Activated B cell treated with CpG ODN at 0.5 μM for 24 hours (primary cell): ENCODE measurements at regions of chr3 and their contacts with region 1.

Region 1: DNA sequence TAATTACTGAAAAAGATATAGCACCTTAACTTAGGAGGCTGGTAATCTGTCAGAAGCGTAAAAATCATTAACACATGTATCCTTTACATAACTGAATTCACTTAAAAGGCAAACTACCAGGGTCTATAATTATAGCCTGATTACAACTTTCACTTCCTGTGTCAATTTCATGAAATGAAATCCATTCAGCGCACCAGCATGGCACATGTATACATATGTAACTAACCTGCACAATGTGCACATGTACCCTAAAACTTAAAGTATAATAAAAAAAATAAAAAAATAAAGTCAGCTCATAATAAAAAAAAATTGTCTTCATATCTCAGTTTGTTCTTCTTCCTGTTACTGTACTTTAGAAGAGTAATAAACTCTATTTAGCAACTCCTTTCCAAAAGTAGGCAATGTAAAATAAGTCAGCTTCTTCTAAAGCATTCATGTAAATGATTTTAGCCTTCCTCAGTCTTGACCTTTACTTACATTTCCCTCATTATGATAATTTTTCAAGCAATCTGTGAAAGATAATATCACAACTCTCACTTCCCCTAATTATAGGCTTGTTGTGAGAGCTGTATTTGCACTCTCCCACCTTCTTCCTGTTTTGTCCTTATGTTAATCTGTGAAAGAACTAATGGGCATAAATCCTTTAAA is 50.1 kb downstream of the KBTBD8 start:
- DNase-seq: no peak
- ATAC-seq: peak; percentile 89
- H3K4me3 Mint-ChIP-seq: peak overlapping the region; percentile 75
- H3K27ac Mint-ChIP-seq: peak overlapping the region; percentile 93
- H3K4me1 Mint-ChIP-seq: peaks cover 52% of the 10 kb centered on the region
- H3K27me3 Mint-ChIP-seq: no peaks in the 10 kb centered on the region
- CTCF ChIP-seq: no peak

Region 2: GRCh38 chr3:66220602-66221377 is 827.4 kb before region 1 on chr3 and contains the start of gene SLC25A26:
- CTCF ChIA-PET with region 1: no interaction called
- POLR2A ChIA-PET with region 1: no interaction called
- intact Hi-C with region 1: loop called (anchors 2 kb)
- DNase-seq: peak; percentile 90
- ATAC-seq: peak; percentile 96
- H3K4me3 Mint-ChIP-seq: peak within 1 kb of the TSS; percentile 98
- H3K27ac Mint-ChIP-seq: peak within 1 kb of the TSS; percentile 93
- H3K4me1 Mint-ChIP-seq: peaks cover 40% of the 10 kb centered on the region
- H3K27me3 Mint-ChIP-seq: peaks cover 3% of the 10 kb centered on the region
- CTCF ChIP-seq: no peak
- total RNA-seq, gene SLC25A26: 20.8 and 23.2 TPM in 2 replicates

Region 3: GRCh38 chr3:66989860-66990665 is 58.1 kb before region 1 on chr3:
- CTCF ChIA-PET with region 1: interaction called, 27 read pairs
- POLR2A ChIA-PET with region 1: interaction called, 10 read pairs
- intact Hi-C with region 1: no loop called
- DNase-seq: no peak
- ATAC-seq: peak; percentile 83
- H3K4me3 Mint-ChIP-seq: peak overlapping the region; percentile 83
- H3K27ac Mint-ChIP-seq: peak overlapping the region; percentile 87
- H3K4me1 Mint-ChIP-seq: peaks cover 5% of the 10 kb centered on the region
- H3K27me3 Mint-ChIP-seq: peaks cover 3% of the 10 kb centered on the region
- CTCF ChIP-seq: no peak

Region 4: GRCh38 chr3:67018105-67018788 is 29.9 kb before region 1 on chr3:
- CTCF ChIA-PET with region 1: interaction called, 4 read pairs
- POLR2A ChIA-PET with region 1: interaction called, 28 read pairs
- intact Hi-C with region 1: loop called (anchors 2 kb)
- DNase-seq: no peak
- ATAC-seq: peak; percentile 38
- H3K4me3 Mint-ChIP-seq: peak overlapping the region; percentile 52
- H3K27ac Mint-ChIP-seq: peak overlapping the region; percentile 69
- H3K4me1 Mint-ChIP-seq: peaks cover 55% of the 10 kb centered on the region
- H3K27me3 Mint-ChIP-seq: no peaks in the 10 kb centered on the region
- CTCF ChIP-seq: no peak

Region 5: GRCh38 chr3:67083277-67083676 is 35.1 kb after region 1 on chr3:
- CTCF ChIA-PET with region 1: interaction called, 4 read pairs
- POLR2A ChIA-PET with region 1: interaction called, 13 read pairs
- intact Hi-C with region 1: no loop called
- DNase-seq: no peak
- ATAC-seq: peak; percentile 73
- H3K4me3 Mint-ChIP-seq: peak overlapping the region; percentile 57
- H3K27ac Mint-ChIP-seq: no peak overlapping the region
- H3K4me1 Mint-ChIP-seq: peaks cover 15% of the 10 kb centered on the region
- H3K27me3 Mint-ChIP-seq: no peaks in the 10 kb centered on the region
- CTCF ChIP-seq: no peak

Region 6: DNA sequence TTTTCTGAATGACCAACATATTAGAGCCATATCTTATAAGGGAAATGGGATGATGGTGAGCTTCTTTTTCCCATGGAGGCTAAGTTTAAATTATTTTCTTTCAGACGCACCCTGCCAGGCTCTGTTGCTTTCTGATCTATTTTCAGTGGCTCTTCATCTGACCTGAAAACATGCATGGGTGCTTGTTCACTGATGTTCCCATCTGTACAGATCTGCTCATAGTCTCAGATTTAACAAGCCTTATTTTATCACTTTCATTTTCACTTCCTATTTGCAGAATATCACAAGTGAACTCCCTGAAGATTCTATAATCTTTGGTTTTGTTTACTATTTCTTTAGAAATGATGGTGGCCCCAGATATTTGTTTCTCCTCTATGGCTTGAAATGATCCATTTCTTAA is 637.3 kb after region 1 on chr3:
- CTCF ChIA-PET with region 1: no interaction called
- POLR2A ChIA-PET with region 1: no interaction called
- intact Hi-C with region 1: loop called (anchors 10 kb)
- DNase-seq: no peak
- ATAC-seq: peak; percentile 91
- H3K4me3 Mint-ChIP-seq: peak overlapping the region; percentile 68
- H3K27ac Mint-ChIP-seq: peak overlapping the region; percentile 91
- H3K4me1 Mint-ChIP-seq: peaks cover 36% of the 10 kb centered on the region
- H3K27me3 Mint-ChIP-seq: no peaks in the 10 kb centered on the region
- CTCF ChIP-seq: no peak